ENCODE measurements at regions of chr5 and their contacts with region 1.

Region 1: GRCh38 chr5:6745706-6746222 is 32.5 kb downstream of the TENT4A start:
- DNase-seq: peak in 6 of 14 experiments; percentile 23 to 77 (median 54)
- ATAC-seq: peak; percentile 80
- H3K4me3 ChIP-seq: no peak overlapping the region
- H3K4me3 Mint-ChIP-seq: no peak overlapping the region
- H3K27ac ChIP-seq: no peak overlapping the region
- H3K27ac Mint-ChIP-seq: no peak overlapping the region
- H3K4me1 ChIP-seq: peaks cover 6% of the 10 kb centered on the region
- H3K4me1 Mint-ChIP-seq: peaks cover 9% of the 10 kb centered on the region
- H3K27me3 ChIP-seq: no peaks in the 10 kb centered on the region
- H3K27me3 Mint-ChIP-seq: no peaks in the 10 kb centered on the region
- CTCF ChIP-seq: peak; percentile 80

Region 2: GRCh38 chr5:5141625-5142532 is 1603.9 kb before region 1 on chr5:
- CTCF ChIA-PET with region 1: no interaction called
- POLR2A ChIA-PET with region 1: no interaction called
- intact Hi-C with region 1: loop called in 1 of 2 experiments (anchors 5 kb)
- DNase-seq: peak in 13 of 14 experiments; percentile 4 to 70 (median 40)
- ATAC-seq: no peak
- H3K4me3 ChIP-seq: no peak overlapping the region
- H3K4me3 Mint-ChIP-seq: no peak overlapping the region
- H3K27ac ChIP-seq: no peak overlapping the region
- H3K27ac Mint-ChIP-seq: no peak overlapping the region
- H3K4me1 ChIP-seq: no peaks in the 10 kb centered on the region
- H3K4me1 Mint-ChIP-seq: peaks cover 9% of the 10 kb centered on the region
- H3K27me3 ChIP-seq: peaks cover 3 to 12% of the 10 kb centered on the region in 2 experiments
- H3K27me3 Mint-ChIP-seq: peaks cover 47% of the 10 kb centered on the region
- CTCF ChIP-seq: peak; percentile 75

Region 3: GRCh38 chr5:5492087-5492933 is 1253.5 kb before region 1 on chr5:
- CTCF ChIA-PET with region 1: interaction called, 4 read pairs
- POLR2A ChIA-PET with region 1: no interaction called
- intact Hi-C with region 1: loop called in 1 of 2 experiments (anchors 1 kb)
- DNase-seq: peak in 10 of 14 experiments; percentile 8 to 81 (median 28)
- ATAC-seq: peak; percentile 41
- H3K4me3 ChIP-seq: no peak overlapping the region
- H3K4me3 Mint-ChIP-seq: peak overlapping the region; percentile 69
- H3K27ac ChIP-seq: no peak overlapping the region
- H3K27ac Mint-ChIP-seq: no peak overlapping the region
- H3K4me1 ChIP-seq: peaks cover 21% of the 10 kb centered on the region
- H3K4me1 Mint-ChIP-seq: peaks cover 18% of the 10 kb centered on the region
- H3K27me3 ChIP-seq: no peaks in the 10 kb centered on the region
- H3K27me3 Mint-ChIP-seq: peaks cover 16% of the 10 kb centered on the region
- CTCF ChIP-seq: peak; percentile 64

Region 4: GRCh38 chr5:6291961-6292360 is 453.8 kb before region 1 on chr5:
- CTCF ChIA-PET with region 1: interaction called, 3 read pairs
- POLR2A ChIA-PET with region 1: no interaction called
- intact Hi-C with region 1: loop called in 1 of 2 experiments (anchors 5 kb)
- DNase-seq: peak in 4 of 14 experiments; percentile 19 to 49 (median 30)
- ATAC-seq: no peak
- H3K4me3 ChIP-seq: no peak overlapping the region
- H3K4me3 Mint-ChIP-seq: no peak overlapping the region
- H3K27ac ChIP-seq: no peak overlapping the region
- H3K27ac Mint-ChIP-seq: no peak overlapping the region
- H3K4me1 ChIP-seq: no peaks in the 10 kb centered on the region
- H3K4me1 Mint-ChIP-seq: no peaks in the 10 kb centered on the region
- H3K27me3 ChIP-seq: no peaks in the 10 kb centered on the region
- H3K27me3 Mint-ChIP-seq: peaks cover 10% of the 10 kb centered on the region
- CTCF ChIP-seq: peak; percentile 39

Region 5: GRCh38 chr5:6615034-6615815 is 130.5 kb before region 1 on chr5:
- CTCF ChIA-PET with region 1: interaction called, 10 read pairs
- POLR2A ChIA-PET with region 1: no interaction called
- intact Hi-C with region 1: no loop called
- DNase-seq: no peak
- ATAC-seq: no peak
- H3K4me3 ChIP-seq: no peak overlapping the region
- H3K4me3 Mint-ChIP-seq: no peak overlapping the region
- H3K27ac ChIP-seq: no peak overlapping the region
- H3K27ac Mint-ChIP-seq: no peak overlapping the region
- H3K4me1 ChIP-seq: no peaks in the 10 kb centered on the region
- H3K4me1 Mint-ChIP-seq: peaks cover 27% of the 10 kb centered on the region
- H3K27me3 ChIP-seq: no peaks in the 10 kb centered on the region
- H3K27me3 Mint-ChIP-seq: no peaks in the 10 kb centered on the region
- CTCF ChIP-seq: no peak

Region 6: DNA sequence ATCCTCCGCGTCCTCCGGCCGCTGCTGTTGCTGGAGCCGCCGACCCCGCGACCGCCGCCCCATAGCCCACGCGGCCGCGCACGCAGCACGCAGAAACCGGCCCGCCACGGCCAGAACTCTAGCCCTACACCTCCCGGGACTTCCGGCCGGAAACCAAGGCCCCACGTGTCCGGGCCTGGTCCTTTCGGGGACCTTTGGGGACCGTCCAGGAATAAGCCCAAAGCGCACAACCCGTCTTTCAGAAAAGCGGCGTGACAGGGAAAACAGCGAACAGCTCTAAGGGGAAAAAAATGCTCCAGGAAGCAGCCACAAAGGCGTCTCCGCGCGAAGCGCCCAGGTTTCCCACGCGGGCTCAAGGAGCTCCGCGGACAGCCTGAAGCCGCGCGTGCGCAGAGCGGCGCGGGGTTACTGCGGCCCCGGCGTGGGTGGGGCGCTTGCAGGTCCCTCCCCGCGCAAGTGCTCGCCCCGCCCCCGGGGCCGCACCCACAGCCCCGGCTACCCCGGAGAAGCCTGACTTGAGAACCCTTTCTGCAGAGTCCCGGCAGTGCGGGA is 112.8 kb before region 1 on chr5 and contains the starts of genes NSUN2 and SRD5A1:
- CTCF ChIA-PET with region 1: interaction called, 13 read pairs
- POLR2A ChIA-PET with region 1: interaction called, 11 read pairs
- intact Hi-C with region 1: loop called (anchors 1 to 2 kb)
- DNase-seq: peak; percentile 78 to 97 (median 90)
- ATAC-seq: peak; percentile 88
- H3K4me3 ChIP-seq: peak within 1 kb of the TSS; percentile 87
- H3K4me3 Mint-ChIP-seq: peak within 1 kb of the TSS; percentile 90
- H3K27ac ChIP-seq: peak within 1 kb of the TSS; percentile 62 to 98
- H3K27ac Mint-ChIP-seq: peak within 1 kb of the TSS; percentile 93
- H3K4me1 ChIP-seq: peaks cover 33% of the 10 kb centered on the region
- H3K4me1 Mint-ChIP-seq: peaks cover 53% of the 10 kb centered on the region
- H3K27me3 ChIP-seq: no peaks in the 10 kb centered on the region
- H3K27me3 Mint-ChIP-seq: no peaks in the 10 kb centered on the region
- CTCF ChIP-seq: no peak
- total RNA-seq, gene NSUN2: 48.3 to 50.8 TPM
- total RNA-seq, gene SRD5A1: 2.3 to 3.0 TPM

Region 7: DNA sequence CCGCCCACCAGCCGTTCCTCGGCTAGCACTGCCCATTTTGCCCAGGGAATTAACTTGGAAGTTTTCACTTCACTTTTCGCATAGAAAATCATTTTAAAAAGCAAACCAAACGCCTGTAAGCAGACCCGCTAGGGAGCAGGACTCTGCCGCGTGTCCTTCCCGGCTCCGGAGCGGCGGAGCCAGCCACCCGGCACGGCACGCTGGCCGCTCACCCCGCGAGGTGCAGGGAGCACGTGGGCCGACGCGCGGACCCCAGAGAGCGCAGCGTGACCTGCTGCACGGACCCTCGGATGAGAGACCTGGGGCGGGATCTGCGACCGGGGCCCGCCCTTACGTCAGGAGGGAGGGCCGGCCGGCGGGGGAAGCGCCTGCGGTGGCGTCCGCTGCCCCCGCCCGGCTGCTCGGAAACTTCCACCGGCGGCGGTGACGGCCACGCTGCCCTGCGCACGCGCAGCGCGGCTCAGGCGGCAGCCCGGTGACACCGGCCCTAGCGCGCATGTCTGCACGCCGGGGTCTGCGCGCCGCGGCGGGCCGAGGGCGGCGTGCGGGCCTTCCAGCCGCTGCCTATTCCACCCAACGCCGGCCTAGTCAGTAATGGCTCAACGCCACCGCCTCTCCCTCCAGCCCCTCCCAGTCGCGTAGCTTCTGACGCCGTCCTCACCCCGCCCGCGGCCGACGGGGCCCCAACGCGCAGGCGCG is 33.0 kb before region 1 on chr5:
- CTCF ChIA-PET with region 1: interaction called, 5 read pairs
- POLR2A ChIA-PET with region 1: interaction called, 3 read pairs
- intact Hi-C with region 1: loop called in 1 of 2 experiments (anchors 2 kb)
- DNase-seq: peak in 9 of 14 experiments; percentile 94 to 99 (median 97)
- ATAC-seq: peak; percentile 71
- H3K4me3 ChIP-seq: peak overlapping the region; percentile 91
- H3K4me3 Mint-ChIP-seq: peak overlapping the region; percentile 95
- H3K27ac ChIP-seq: peak overlapping the region; percentile 72 to 84
- H3K27ac Mint-ChIP-seq: peak overlapping the region; percentile 78
- H3K4me1 ChIP-seq: peaks cover 34% of the 10 kb centered on the region
- H3K4me1 Mint-ChIP-seq: peaks cover 40% of the 10 kb centered on the region
- H3K27me3 ChIP-seq: no peaks in the 10 kb centered on the region
- H3K27me3 Mint-ChIP-seq: no peaks in the 10 kb centered on the region
- CTCF ChIP-seq: no peak

Region 8: DNA sequence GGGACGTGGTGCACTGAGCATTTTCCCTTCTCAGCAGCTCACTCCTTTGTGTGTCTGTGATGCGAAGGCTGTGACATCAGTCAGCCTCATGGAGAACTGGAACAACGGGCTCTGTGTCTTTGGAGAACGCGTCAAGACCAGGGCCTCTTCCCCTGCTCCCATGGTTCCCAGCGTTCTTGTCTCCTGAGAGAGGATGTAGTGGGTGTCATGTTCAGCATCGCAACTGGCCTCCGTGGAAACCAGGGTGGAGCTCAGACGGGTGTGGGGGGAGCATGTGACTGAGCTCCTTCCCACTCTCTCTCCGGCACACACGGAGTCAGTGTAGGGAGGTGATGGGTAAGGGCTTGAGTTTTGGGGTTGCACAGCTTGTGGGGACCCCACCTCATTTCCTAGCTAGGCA is 27.1 kb after region 1 on chr5:
- CTCF ChIA-PET with region 1: no interaction called
- POLR2A ChIA-PET with region 1: no interaction called
- intact Hi-C with region 1: no loop called
- DNase-seq: no peak
- ATAC-seq: no peak
- H3K4me3 ChIP-seq: no peak overlapping the region
- H3K4me3 Mint-ChIP-seq: no peak overlapping the region
- H3K27ac ChIP-seq: no peak overlapping the region
- H3K27ac Mint-ChIP-seq: no peak overlapping the region
- H3K4me1 ChIP-seq: peaks cover 5% of the 10 kb centered on the region
- H3K4me1 Mint-ChIP-seq: peaks cover 6% of the 10 kb centered on the region
- H3K27me3 ChIP-seq: peaks cover 8 to 9% of the 10 kb centered on the region in 2 experiments
- H3K27me3 Mint-ChIP-seq: peaks cover 11% of the 10 kb centered on the region
- CTCF ChIP-seq: no peak

Region 9: GRCh38 chr5:6820851-6821479 is 75.2 kb after region 1 on chr5:
- CTCF ChIA-PET with region 1: no interaction called
- POLR2A ChIA-PET with region 1: no interaction called
- intact Hi-C with region 1: no loop called
- DNase-seq: peak in 11 of 14 experiments; percentile 13 to 64 (median 25)
- ATAC-seq: peak; percentile 70
- H3K4me3 ChIP-seq: no peak overlapping the region
- H3K4me3 Mint-ChIP-seq: no peak overlapping the region
- H3K27ac ChIP-seq: no peak overlapping the region
- H3K27ac Mint-ChIP-seq: no peak overlapping the region
- H3K4me1 ChIP-seq: no peaks in the 10 kb centered on the region
- H3K4me1 Mint-ChIP-seq: no peaks in the 10 kb centered on the region
- H3K27me3 ChIP-seq: peaks cover 0 to 10% of the 10 kb centered on the region in 2 experiments
- H3K27me3 Mint-ChIP-seq: peaks cover 29% of the 10 kb centered on the region
- CTCF ChIP-seq: peak; percentile 48

Region 10: GRCh38 chr5:6849316-6850105 is 103.7 kb after region 1 on chr5:
- CTCF ChIA-PET with region 1: no interaction called
- POLR2A ChIA-PET with region 1: no interaction called
- intact Hi-C with region 1: no loop called
- DNase-seq: peak in 1 of 14 experiments; percentile 33
- ATAC-seq: peak; percentile 41
- H3K4me3 ChIP-seq: no peak overlapping the region
- H3K4me3 Mint-ChIP-seq: no peak overlapping the region
- H3K27ac ChIP-seq: no peak overlapping the region
- H3K27ac Mint-ChIP-seq: no peak overlapping the region
- H3K4me1 ChIP-seq: peaks cover 12% of the 10 kb centered on the region
- H3K4me1 Mint-ChIP-seq: peaks cover 14% of the 10 kb centered on the region
- H3K27me3 ChIP-seq: no peaks in the 10 kb centered on the region
- H3K27me3 Mint-ChIP-seq: no peaks in the 10 kb centered on the region
- CTCF ChIP-seq: no peak

Region 11: GRCh38 chr5:6886866-6887265 is 141.1 kb after region 1 on chr5:
- CTCF ChIA-PET with region 1: no interaction called
- POLR2A ChIA-PET with region 1: no interaction called
- intact Hi-C with region 1: no loop called
- DNase-seq: no peak
- ATAC-seq: no peak
- H3K4me3 ChIP-seq: no peak overlapping the region
- H3K4me3 Mint-ChIP-seq: no peak overlapping the region
- H3K27ac ChIP-seq: no peak overlapping the region
- H3K27ac Mint-ChIP-seq: no peak overlapping the region
- H3K4me1 ChIP-seq: no peaks in the 10 kb centered on the region
- H3K4me1 Mint-ChIP-seq: no peaks in the 10 kb centered on the region
- H3K27me3 ChIP-seq: peaks cover 0 to 4% of the 10 kb centered on the region in 2 experiments
- H3K27me3 Mint-ChIP-seq: no peaks in the 10 kb centered on the region
- CTCF ChIP-seq: no peak